RWPE1 (cell line): ENCODE measurements at regions of chr18 and their contacts with region 1.

Region 1: GRCh38 chr18:31500051-31500688 is 2.2 kb downstream of the DSG2 start:
- DNase-seq: no peak
- H3K27ac ChIP-seq: 0 out of 2 replicates have a peak overlapping the region, but pooled peaks have one; percentile 22
- CTCF ChIP-seq: no peak

Region 2: GRCh38 chr18:31077878-31078277 is 422.3 kb before region 1 on chr18:
- CTCF ChIA-PET with region 1: no interaction called
- POLR2A ChIA-PET with region 1: interaction called, 10 read pairs
- DNase-seq: no peak
- H3K27ac ChIP-seq: no peak overlapping the region
- CTCF ChIP-seq: no peak